ENCODE measurements at regions of chr9 and their contacts with region 1.

Region 1: GRCh38 chr9:69193685-69194032 is 19.6 kb downstream of the TJP2 start:
- DNase-seq: no peak
- ATAC-seq: no peak
- H3K4me3 ChIP-seq: no peak overlapping the region
- H3K4me3 Mint-ChIP-seq: no peak overlapping the region
- H3K27ac ChIP-seq: no peak overlapping the region
- H3K27ac Mint-ChIP-seq: no peak overlapping the region
- H3K4me1 ChIP-seq: peaks cover 2 to 7% of the 10 kb centered on the region in 2 experiments
- H3K4me1 Mint-ChIP-seq: peaks cover 8 to 20% (median 16%) of the 10 kb centered on the region in 3 donors
- H3K27me3 ChIP-seq: no peaks in the 10 kb centered on the region
- H3K27me3 Mint-ChIP-seq: no peaks in the 10 kb centered on the region

Region 2: GRCh38 chr9:68966496-68966944 is 227.1 kb before region 1 on chr9:
- CTCF ChIA-PET with region 1: no interaction called
- POLR2A ChIA-PET with region 1: no interaction called
- DNase-seq: no peak
- ATAC-seq: no peak
- H3K4me3 ChIP-seq: no peak overlapping the region
- H3K4me3 Mint-ChIP-seq: no peak overlapping the region
- H3K27ac ChIP-seq: no peak overlapping the region
- H3K27ac Mint-ChIP-seq: no peak overlapping the region
- H3K4me1 ChIP-seq: no peaks in the 10 kb centered on the region
- H3K4me1 Mint-ChIP-seq: no peaks in the 10 kb centered on the region
- H3K27me3 ChIP-seq: no peaks in the 10 kb centered on the region
- H3K27me3 Mint-ChIP-seq: peaks cover 0 to 7% of the 10 kb centered on the region in 2 donors

Region 3: GRCh38 chr9:69056191-69056815 is 137.4 kb before region 1 on chr9:
- CTCF ChIA-PET with region 1: interaction called, 31 to 56 read pairs
- POLR2A ChIA-PET with region 1: interaction called in 1 of 2 experiments, 3 read pairs
- DNase-seq: no peak
- ATAC-seq: no peak
- H3K4me3 ChIP-seq: no peak overlapping the region
- H3K4me3 Mint-ChIP-seq: no peak overlapping the region
- H3K27ac ChIP-seq: no peak overlapping the region
- H3K27ac Mint-ChIP-seq: no peak overlapping the region
- H3K4me1 ChIP-seq: no peaks in the 10 kb centered on the region
- H3K4me1 Mint-ChIP-seq: peaks cover 6 to 11% (median 10%) of the 10 kb centered on the region in 3 donors
- H3K27me3 ChIP-seq: no peaks in the 10 kb centered on the region
- H3K27me3 Mint-ChIP-seq: no peaks in the 10 kb centered on the region

Region 4: GRCh38 chr9:69157751-69158466 is 35.8 kb before region 1 on chr9:
- CTCF ChIA-PET with region 1: interaction called, 3 to 13 read pairs
- POLR2A ChIA-PET with region 1: no interaction called
- DNase-seq: no peak
- ATAC-seq: no peak
- H3K4me3 ChIP-seq: no peak overlapping the region
- H3K4me3 Mint-ChIP-seq: no peak overlapping the region
- H3K27ac ChIP-seq: no peak overlapping the region
- H3K27ac Mint-ChIP-seq: no peak overlapping the region
- H3K4me1 ChIP-seq: no peaks in the 10 kb centered on the region
- H3K4me1 Mint-ChIP-seq: no peaks in the 10 kb centered on the region
- H3K27me3 ChIP-seq: no peaks in the 10 kb centered on the region
- H3K27me3 Mint-ChIP-seq: no peaks in the 10 kb centered on the region

Region 5: DNA sequence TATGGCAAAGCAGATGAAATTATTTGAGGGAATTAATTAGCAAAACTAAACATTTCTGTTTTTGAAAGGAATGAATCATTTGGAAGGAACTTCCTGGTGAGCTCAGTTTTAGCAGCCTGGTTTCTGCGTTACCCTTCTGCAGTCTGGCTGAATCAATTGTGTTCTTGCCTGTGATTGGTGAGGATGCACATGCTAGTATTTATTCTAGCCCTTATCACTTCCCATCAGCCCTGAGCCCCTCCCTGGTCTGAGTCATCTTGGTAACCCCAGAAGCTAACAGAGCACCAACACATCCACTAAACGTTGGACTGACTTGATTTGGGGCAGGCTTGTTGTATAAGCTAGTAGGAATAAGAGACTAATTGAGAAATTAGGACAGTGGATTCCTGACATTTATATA is 13.0 kb before region 1 on chr9:
- CTCF ChIA-PET with region 1: interaction called, 4 to 11 read pairs
- POLR2A ChIA-PET with region 1: no interaction called
- DNase-seq: peak in 6 of 35 experiments; percentile 1 to 48 (median 14)
- ATAC-seq: peak; percentile 73 to 98 (median 94)
- H3K4me3 ChIP-seq: no peak overlapping the region
- H3K4me3 Mint-ChIP-seq: peak overlapping the region in 1 of 3 donors; percentile 40
- H3K27ac ChIP-seq: no peak overlapping the region
- H3K27ac Mint-ChIP-seq: peak overlapping the region; percentile 17 to 78
- H3K4me1 ChIP-seq: peaks cover 0 to 2% of the 10 kb centered on the region in 2 experiments
- H3K4me1 Mint-ChIP-seq: peaks cover 18 to 50% (median 30%) of the 10 kb centered on the region in 3 donors
- H3K27me3 ChIP-seq: no peaks in the 10 kb centered on the region
- H3K27me3 Mint-ChIP-seq: no peaks in the 10 kb centered on the region

Region 6: DNA sequence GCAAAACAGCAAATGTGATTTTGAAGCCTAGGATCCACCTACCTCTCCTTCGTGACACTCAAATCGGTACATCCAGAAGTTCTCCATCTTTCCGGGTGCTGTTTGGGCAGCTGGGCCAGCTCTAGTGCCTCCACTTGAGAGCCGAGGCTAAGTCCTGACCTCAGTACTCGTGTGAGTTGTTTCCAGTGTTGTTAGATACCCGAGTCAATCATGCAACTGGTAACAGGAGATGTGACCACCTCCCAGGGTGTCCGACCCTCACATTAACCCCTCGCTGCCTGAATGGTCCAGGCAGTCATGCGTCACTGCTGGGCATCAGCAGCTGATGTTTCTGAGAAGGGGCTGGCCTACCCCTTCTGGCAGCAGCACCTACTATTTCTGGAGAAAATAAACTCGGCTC is 301.6 kb after region 1 on chr9:
- CTCF ChIA-PET with region 1: no interaction called
- POLR2A ChIA-PET with region 1: no interaction called
- DNase-seq: no peak
- ATAC-seq: no peak
- H3K4me3 ChIP-seq: no peak overlapping the region
- H3K4me3 Mint-ChIP-seq: no peak overlapping the region
- H3K27ac ChIP-seq: no peak overlapping the region
- H3K27ac Mint-ChIP-seq: no peak overlapping the region
- H3K4me1 ChIP-seq: no peaks in the 10 kb centered on the region
- H3K4me1 Mint-ChIP-seq: no peaks in the 10 kb centered on the region
- H3K27me3 ChIP-seq: no peaks in the 10 kb centered on the region
- H3K27me3 Mint-ChIP-seq: no peaks in the 10 kb centered on the region

Measured in T-cell (primary cell).